CD8-positive, alpha-beta memory T cell (primary cell): ENCODE measurements at regions of chr19 and their contacts with region 1.

Region 1: DNA sequence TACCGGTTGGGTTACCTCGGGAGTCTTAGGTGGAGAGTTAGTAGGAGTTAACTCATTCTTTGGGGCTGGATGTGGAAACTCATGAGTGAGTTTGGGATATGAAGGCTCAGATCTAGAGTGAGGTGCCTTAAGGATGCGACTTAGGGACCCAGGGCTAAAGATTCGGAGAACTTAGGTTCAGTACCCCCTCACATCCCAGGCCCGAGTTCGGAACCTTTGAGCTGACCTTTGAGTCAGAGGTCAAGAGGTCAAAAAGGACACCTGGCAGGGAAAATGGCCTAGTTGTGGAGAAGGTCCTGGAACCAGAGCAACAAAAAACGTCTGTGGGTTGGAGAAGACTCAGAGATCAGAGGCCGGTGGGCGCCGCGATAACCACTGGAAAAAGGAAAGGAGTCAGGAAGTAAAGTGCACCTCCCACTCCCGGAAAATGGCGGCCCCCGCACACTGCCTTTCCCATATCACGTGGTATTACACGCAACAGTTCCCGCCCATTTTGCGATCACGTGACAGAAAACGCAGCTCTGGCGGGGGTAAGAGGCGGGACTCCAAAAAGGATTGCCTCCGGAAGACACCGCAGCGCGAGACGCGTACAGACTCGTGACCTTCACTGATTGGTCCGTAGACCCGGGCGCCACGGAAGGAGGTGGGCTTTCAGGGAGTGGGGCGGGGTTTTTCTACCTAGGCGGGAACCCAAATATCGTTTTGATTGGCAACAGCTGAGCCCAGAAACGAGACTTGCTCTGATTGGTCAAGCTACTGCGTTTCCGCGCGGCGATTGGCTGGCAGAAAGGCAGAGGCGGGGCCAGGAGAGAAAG is at the start of gene ACTMAP:
- DNase-seq: peak; percentile 98 to 100 (median 100)
- H3K4me3 ChIP-seq: peak within 1 kb of the TSS; percentile 83
- H3K4me3 Mint-ChIP-seq: peak within 1 kb of the TSS; percentile 94 to 99 (median 98)
- H3K27ac ChIP-seq: peak within 1 kb of the TSS; percentile 92
- H3K27ac Mint-ChIP-seq: peak within 1 kb of the TSS; percentile 95 to 100 (median 98)
- H3K4me1 ChIP-seq: peaks cover 30% of the 10 kb centered on the region
- H3K4me1 Mint-ChIP-seq: peaks cover 34 to 43% (median 40%) of the 10 kb centered on the region in 3 donors
- H3K27me3 ChIP-seq: no peaks in the 10 kb centered on the region
- H3K27me3 Mint-ChIP-seq: peaks cover 0 to 3% of the 10 kb centered on the region in 2 donors
- total RNA-seq, gene ACTMAP: 10.3 to 10.6 TPM

Region 2: GRCh38 chr19:40381321-40381720 is 368.9 kb before region 1 on chr19:
- CTCF ChIA-PET with region 1: no interaction called
- POLR2A ChIA-PET with region 1: no interaction called
- DNase-seq: no peak
- H3K4me3 ChIP-seq: no peak overlapping the region
- H3K4me3 Mint-ChIP-seq: no peak overlapping the region
- H3K27ac ChIP-seq: no peak overlapping the region
- H3K27ac Mint-ChIP-seq: peak overlapping the region in 2 of 8 donors; percentile 3 to 51
- H3K4me1 ChIP-seq: no peaks in the 10 kb centered on the region
- H3K4me1 Mint-ChIP-seq: no peaks in the 10 kb centered on the region
- H3K27me3 ChIP-seq: no peaks in the 10 kb centered on the region
- H3K27me3 Mint-ChIP-seq: peaks cover 0 to 10% of the 10 kb centered on the region in 2 donors

Region 3: DNA sequence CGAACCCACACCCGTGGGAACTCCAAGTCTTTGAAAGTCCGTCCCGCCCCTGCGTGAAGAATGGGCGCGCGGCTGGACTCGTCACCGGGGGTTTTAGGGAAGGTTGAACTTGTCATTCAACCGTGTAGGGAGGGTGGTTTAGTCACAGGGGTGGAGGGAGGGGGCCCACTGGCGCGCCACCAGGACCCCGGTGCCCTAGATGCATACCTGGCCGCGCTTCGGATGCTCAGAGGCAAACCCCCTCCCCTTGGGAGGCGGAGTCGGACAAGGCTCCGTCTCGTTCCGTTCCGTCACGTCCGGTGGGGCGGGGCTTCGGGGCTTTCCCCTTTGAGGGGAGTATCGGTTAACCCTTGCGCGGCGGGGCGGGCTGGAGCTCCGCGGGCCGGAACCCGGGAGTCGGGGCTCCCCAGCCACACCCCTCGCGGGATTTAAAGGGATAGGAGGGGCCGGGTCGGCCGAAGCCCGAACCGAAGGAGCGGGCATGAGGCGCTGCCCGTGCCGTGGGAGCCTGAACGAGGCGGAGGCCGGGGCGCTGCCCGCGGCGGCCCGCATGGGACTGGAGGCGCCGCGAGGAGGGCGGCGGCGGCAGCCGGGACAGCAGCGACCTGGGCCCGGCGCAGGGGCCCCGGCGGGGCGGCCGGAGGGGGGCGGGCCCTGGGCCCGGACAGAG is 33.5 kb before region 1 on chr19 and contains the starts of genes COQ8B and ITPKC:
- CTCF ChIA-PET with region 1: interaction called, 4 read pairs
- POLR2A ChIA-PET with region 1: interaction called, 11 read pairs
- DNase-seq: peak; percentile 98 to 100 (median 99)
- H3K4me3 ChIP-seq: peak within 1 kb of the TSS; percentile 99
- H3K4me3 Mint-ChIP-seq: peak within 1 kb of the TSS; percentile 87 to 97 (median 91)
- H3K27ac ChIP-seq: peak within 1 kb of the TSS; percentile 98
- H3K27ac Mint-ChIP-seq: peak within 1 kb of the TSS; percentile 93 to 100 (median 98)
- H3K4me1 ChIP-seq: peaks cover 59% of the 10 kb centered on the region
- H3K4me1 Mint-ChIP-seq: peaks cover 58 to 81% (median 72%) of the 10 kb centered on the region in 3 donors
- H3K27me3 ChIP-seq: no peaks in the 10 kb centered on the region
- H3K27me3 Mint-ChIP-seq: peaks cover 0 to 2% of the 10 kb centered on the region in 2 donors
- total RNA-seq, gene COQ8B: 20.6 to 25.7 TPM
- total RNA-seq, gene ITPKC: 5.5 to 5.7 TPM

Region 4: DNA sequence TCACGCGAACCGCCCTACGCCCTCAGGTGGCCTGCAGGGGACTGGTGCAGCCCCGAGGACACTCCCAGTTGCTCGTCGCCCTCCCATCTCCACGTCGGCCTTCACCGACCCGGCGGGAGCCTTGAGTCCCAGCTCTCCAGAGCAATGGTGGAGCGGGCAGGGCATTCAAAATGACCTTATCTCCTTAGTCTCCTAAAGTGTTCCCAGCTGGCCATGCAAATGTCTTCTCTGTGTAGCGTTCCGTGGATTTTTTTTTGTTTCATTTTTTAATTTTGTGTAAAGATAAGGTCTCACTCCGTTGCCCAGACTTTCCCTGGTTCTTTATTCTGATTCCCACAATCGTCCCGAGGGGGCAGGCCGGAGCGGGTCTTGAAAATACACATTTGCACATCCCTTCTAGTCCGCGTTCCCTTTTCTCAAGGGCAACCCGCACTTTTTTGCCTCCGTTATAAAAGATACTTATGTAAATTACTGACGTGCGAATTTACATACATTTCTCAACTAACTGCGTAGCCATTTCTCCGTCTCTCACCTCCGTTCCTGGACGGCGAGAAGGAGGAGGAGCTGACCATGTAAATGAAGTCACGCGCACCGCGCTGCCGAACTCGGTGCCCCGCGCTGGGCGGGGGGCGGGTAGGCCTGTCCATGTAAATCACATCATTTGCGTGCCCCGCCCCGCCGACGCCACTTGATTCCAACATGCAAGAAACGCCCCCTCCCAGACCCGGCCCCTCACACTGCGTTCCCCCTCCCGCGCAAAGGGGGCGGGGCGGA is 48.1 kb after region 1 on chr19:
- CTCF ChIA-PET with region 1: interaction called, 9 read pairs
- POLR2A ChIA-PET with region 1: interaction called, 31 read pairs
- DNase-seq: peak; percentile 100
- H3K4me3 ChIP-seq: peak overlapping the region; percentile 66
- H3K4me3 Mint-ChIP-seq: peak overlapping the region; percentile 90 to 99 (median 97)
- H3K27ac ChIP-seq: peak overlapping the region; percentile 93
- H3K27ac Mint-ChIP-seq: peak overlapping the region; percentile 98 to 100 (median 100)
- H3K4me1 ChIP-seq: peaks cover 44% of the 10 kb centered on the region
- H3K4me1 Mint-ChIP-seq: peaks cover 36 to 51% (median 41%) of the 10 kb centered on the region in 3 donors
- H3K27me3 ChIP-seq: no peaks in the 10 kb centered on the region
- H3K27me3 Mint-ChIP-seq: no peaks in the 10 kb centered on the region

Region 5: DNA sequence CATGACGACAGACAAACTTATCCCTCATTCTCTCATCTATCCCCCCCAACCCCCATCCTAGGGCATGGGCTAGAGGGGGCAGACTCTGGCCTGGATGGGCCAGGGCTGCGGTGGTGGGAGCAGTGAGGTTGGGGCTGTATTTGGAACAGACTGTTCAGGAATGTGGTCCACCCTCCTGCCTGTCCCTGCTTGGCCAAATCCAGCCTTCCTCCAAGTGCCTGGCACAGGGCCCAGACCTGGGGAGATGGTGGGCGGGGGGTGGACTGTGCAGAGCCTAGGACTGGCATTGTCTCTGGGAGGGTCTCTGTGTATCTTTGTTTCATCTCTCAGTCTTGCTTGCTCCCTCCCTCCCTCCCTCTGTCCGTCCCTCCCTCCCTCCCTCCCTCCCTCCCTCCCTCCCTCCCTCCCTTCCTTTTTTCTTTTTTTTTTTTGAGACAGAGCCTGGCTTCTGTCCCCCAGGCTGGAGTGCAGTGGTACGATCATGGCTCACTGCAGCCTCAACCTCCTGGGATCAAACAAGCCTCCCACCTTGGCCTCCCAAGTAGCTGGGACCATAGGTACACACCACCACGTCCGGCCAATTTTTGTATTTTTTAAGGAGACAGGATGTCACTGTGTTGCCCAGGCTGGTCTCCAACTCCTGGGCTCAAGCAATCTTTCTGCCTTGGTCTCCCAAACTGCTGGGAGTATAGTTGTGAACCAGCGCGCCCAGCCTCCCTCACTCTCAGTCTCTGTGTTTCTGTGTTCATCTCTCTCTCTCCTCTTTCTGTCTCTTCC is 63.1 kb after region 1 on chr19:
- CTCF ChIA-PET with region 1: interaction called, 16 read pairs
- POLR2A ChIA-PET with region 1: interaction called, 3 read pairs
- DNase-seq: no peak
- H3K4me3 ChIP-seq: no peak overlapping the region
- H3K4me3 Mint-ChIP-seq: peak overlapping the region in 3 of 7 donors; percentile 87 to 92 (median 90)
- H3K27ac ChIP-seq: no peak overlapping the region
- H3K27ac Mint-ChIP-seq: peak overlapping the region in 6 of 8 donors; percentile 25 to 86 (median 34)
- H3K4me1 ChIP-seq: peaks cover 28% of the 10 kb centered on the region
- H3K4me1 Mint-ChIP-seq: peaks cover 30 to 41% (median 40%) of the 10 kb centered on the region in 3 donors
- H3K27me3 ChIP-seq: no peaks in the 10 kb centered on the region
- H3K27me3 Mint-ChIP-seq: peaks cover 0 to 4% of the 10 kb centered on the region in 2 donors

Region 6: DNA sequence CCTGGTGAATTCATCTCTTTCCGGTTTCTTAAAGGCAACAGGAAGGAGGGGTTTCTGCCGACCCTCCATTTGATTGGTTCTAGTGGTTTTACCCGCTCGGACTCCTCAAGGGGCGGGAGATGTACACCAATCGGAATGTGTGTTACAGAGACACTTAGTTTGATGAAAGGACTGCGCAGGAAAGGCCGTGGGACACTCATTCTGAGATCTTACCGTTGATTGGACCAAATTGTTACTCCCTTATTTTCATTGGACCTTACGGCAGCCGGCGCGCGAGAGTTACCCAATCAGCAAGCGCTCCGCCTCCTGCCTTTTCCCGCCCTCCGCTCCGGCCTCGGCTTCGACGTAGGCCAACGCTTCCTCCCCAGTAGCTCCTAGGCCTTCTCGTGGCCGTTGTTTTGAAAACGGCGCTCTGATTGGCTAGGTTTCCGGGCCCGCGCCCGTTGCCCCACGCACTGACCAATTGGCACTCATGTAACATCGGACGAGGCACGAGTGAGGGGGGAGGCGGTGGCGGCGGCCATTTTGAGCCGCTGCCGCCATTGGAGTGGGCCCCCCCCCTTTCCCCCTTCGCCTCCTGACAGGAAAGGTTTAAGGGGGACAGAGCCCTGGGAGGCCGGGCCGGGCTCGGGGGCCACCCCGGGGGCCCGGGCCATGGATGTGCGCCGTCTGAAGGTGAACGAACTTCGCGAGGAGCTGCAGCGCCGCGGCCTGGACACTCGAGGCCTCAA is 513.7 kb after region 1 on chr19 and contains the start of gene HNRNPUL1:
- CTCF ChIA-PET with region 1: no interaction called
- POLR2A ChIA-PET with region 1: interaction called, 12 read pairs
- DNase-seq: peak; percentile 98 to 100 (median 100)
- H3K4me3 ChIP-seq: peak within 1 kb of the TSS; percentile 82
- H3K4me3 Mint-ChIP-seq: peak within 1 kb of the TSS; percentile 91 to 99 (median 97)
- H3K27ac ChIP-seq: peak within 1 kb of the TSS; percentile 100
- H3K27ac Mint-ChIP-seq: peak within 1 kb of the TSS; percentile 99 to 100 (median 100)
- H3K4me1 ChIP-seq: peaks cover 34% of the 10 kb centered on the region
- H3K4me1 Mint-ChIP-seq: peaks cover 37 to 57% (median 47%) of the 10 kb centered on the region in 3 donors
- H3K27me3 ChIP-seq: no peaks in the 10 kb centered on the region
- H3K27me3 Mint-ChIP-seq: peaks cover 0 to 19% of the 10 kb centered on the region in 2 donors
- total RNA-seq, gene HNRNPUL1: 270 to 279 TPM